ENCODE measurements at regions of chr3 and their contacts with region 1.

Region 1: GRCh38 chr3:185779461-185779860 is 45.4 kb downstream of the IGF2BP2 start:
- DNase-seq: no peak
- H3K4me3 ChIP-seq: no peak overlapping the region
- H3K27ac ChIP-seq: no peak overlapping the region
- H3K4me1 ChIP-seq: peaks cover 5% of the 10 kb centered on the region
- H3K27me3 ChIP-seq: no peaks in the 10 kb centered on the region
- CTCF ChIP-seq: no peak
- POLR2A ChIP-seq: no peak

Region 2: DNA sequence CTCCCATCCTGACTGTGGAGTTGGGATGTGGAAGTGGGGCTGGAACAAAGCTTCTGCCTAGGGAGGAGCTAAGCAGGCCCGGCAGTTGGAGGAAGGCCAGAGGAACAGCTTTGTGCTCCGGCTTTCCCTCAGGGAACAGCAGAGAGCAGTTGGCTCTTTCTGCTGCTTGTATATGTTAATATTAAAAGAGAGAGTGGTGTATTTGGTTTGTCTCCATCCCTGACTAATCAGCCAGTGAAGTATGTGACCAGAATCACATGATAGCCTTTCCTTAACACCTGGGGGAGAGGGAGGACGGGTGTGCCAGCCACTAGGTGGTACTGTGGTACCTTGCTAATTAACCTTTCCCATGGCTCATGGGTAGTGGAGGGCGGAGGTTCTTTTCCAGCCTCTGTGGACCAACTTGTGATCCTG is 1634.3 kb before region 1 on chr3:
- intact Hi-C with region 1: no loop called
- DNase-seq: no peak
- H3K4me3 ChIP-seq: no peak overlapping the region
- H3K27ac ChIP-seq: no peak overlapping the region
- H3K4me1 ChIP-seq: peaks cover 10% of the 10 kb centered on the region
- H3K27me3 ChIP-seq: no peaks in the 10 kb centered on the region
- CTCF ChIP-seq: peak in 1 of 3 experiments; percentile 24
- POLR2A ChIP-seq: no peak

Region 3: GRCh38 chr3:185659942-185660921 is 119.2 kb before region 1 on chr3:
- intact Hi-C with region 1: loop called (anchors 10 kb)
- DNase-seq: peak in 1 of 2 donors; percentile 87
- H3K4me3 ChIP-seq: no peak overlapping the region
- H3K27ac ChIP-seq: peak overlapping the region; percentile 94
- H3K4me1 ChIP-seq: peaks cover 53% of the 10 kb centered on the region
- H3K27me3 ChIP-seq: no peaks in the 10 kb centered on the region
- CTCF ChIP-seq: peak; percentile 88 to 93 (median 91)
- POLR2A ChIP-seq: no peak

Region 4: GRCh38 chr3:186217820-186218164 is 438.3 kb after region 1 on chr3:
- intact Hi-C with region 1: no loop called
- DNase-seq: no peak
- H3K4me3 ChIP-seq: no peak overlapping the region
- H3K27ac ChIP-seq: no peak overlapping the region
- H3K4me1 ChIP-seq: no peaks in the 10 kb centered on the region
- H3K27me3 ChIP-seq: no peaks in the 10 kb centered on the region
- CTCF ChIP-seq: no peak
- POLR2A ChIP-seq: no peak